ENCODE measurements at regions of chr15 and their contacts with region 1.

Region 1: GRCh38 chr15:45634442-45635190 is at the start of gene SQOR:
- DNase-seq: peak; percentile 65 to 93
- H3K4me3 ChIP-seq: peak within 1 kb of the TSS; percentile 77 to 83
- H3K27ac ChIP-seq: peak within 1 kb of the TSS; percentile 91 to 93
- H3K4me1 ChIP-seq: peaks cover 16 to 31% of the 10 kb centered on the region in 2 donors
- H3K27me3 ChIP-seq: no peaks in the 10 kb centered on the region
- CTCF ChIP-seq: no peak
- total RNA-seq, gene SQOR: 61.4 TPM

Region 2: DNA sequence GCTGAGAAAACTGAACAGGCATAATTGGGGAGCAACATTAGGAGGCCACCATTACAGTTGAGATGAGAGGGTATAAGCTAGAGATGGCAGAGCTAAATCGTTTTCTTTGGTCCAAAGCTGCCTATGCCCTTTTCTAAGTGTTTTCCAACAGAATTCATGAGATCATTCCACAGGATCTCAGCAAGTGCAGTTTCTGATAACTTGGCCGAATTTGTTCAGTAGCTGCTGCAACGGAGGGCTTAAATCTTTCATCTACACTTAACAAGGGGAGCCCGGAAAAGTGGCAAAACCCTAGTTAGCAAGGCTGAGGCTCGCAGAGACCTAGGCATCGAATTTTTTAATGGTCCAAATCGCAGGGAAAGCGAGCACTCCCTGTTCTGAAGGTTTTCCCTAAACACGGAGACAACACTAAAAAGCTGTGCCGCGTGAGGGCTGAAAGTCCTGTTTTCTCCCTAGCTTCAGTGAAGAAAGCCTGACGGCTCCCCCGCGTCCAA is 48.0 kb before region 1 on chr15:
- intact Hi-C with region 1: loop called (anchors 1 kb)
- DNase-seq: no peak
- H3K4me3 ChIP-seq: peak overlapping the region; percentile 82 to 92
- H3K27ac ChIP-seq: peak overlapping the region; percentile 97 to 99
- H3K4me1 ChIP-seq: peaks cover 3 to 33% of the 10 kb centered on the region in 2 donors
- H3K27me3 ChIP-seq: no peaks in the 10 kb centered on the region
- CTCF ChIP-seq: no peak

Region 3: GRCh38 chr15:45660231-45660979 is 25.8 kb after region 1 on chr15:
- intact Hi-C with region 1: loop called (anchors 2 kb)
- DNase-seq: peak in 1 of 2 donors; percentile 74
- H3K4me3 ChIP-seq: peak overlapping the region in 1 of 2 donors; percentile 9
- H3K27ac ChIP-seq: peak overlapping the region; percentile 82 to 90
- H3K4me1 ChIP-seq: peaks cover 10 to 31% of the 10 kb centered on the region in 2 donors
- H3K27me3 ChIP-seq: no peaks in the 10 kb centered on the region
- CTCF ChIP-seq: peak in 2 of 3 experiments; percentile 9 to 12

Region 4: DNA sequence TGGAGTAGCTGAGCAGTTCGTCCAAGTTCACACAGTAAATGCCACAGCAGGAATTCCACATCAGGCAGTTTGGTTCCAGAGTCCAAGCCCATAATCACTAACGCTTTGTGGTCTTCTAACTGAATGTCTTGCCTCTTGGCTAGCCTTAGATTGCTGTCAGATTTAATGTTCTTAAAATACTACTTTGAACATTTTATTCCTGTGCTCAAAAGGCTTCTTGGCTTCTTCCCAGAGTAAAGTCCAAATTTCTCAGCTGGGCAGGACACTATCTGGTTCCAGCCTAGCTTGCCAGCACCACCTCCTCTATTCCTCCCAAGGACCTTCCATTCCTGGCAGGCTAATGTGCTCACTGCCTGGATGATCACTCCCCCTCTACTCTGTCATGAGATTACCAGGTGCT is 257.1 kb after region 1 on chr15:
- intact Hi-C with region 1: loop called (anchors 10 kb)
- DNase-seq: peak in 1 of 2 donors; percentile 76
- H3K4me3 ChIP-seq: no peak overlapping the region
- H3K27ac ChIP-seq: peak overlapping the region; percentile 56 to 63
- H3K4me1 ChIP-seq: peaks cover 0 to 13% of the 10 kb centered on the region in 2 donors
- H3K27me3 ChIP-seq: no peaks in the 10 kb centered on the region
- CTCF ChIP-seq: no peak

Region 5: GRCh38 chr15:45958922-45959321 is 324.3 kb after region 1 on chr15:
- intact Hi-C with region 1: no loop called
- DNase-seq: no peak
- H3K4me3 ChIP-seq: no peak overlapping the region
- H3K27ac ChIP-seq: no peak overlapping the region
- H3K4me1 ChIP-seq: no peaks in the 10 kb centered on the region
- H3K27me3 ChIP-seq: no peaks in the 10 kb centered on the region
- CTCF ChIP-seq: no peak